ENCODE measurements at regions of chr1 and their contacts with region 1.

Region 1: DNA sequence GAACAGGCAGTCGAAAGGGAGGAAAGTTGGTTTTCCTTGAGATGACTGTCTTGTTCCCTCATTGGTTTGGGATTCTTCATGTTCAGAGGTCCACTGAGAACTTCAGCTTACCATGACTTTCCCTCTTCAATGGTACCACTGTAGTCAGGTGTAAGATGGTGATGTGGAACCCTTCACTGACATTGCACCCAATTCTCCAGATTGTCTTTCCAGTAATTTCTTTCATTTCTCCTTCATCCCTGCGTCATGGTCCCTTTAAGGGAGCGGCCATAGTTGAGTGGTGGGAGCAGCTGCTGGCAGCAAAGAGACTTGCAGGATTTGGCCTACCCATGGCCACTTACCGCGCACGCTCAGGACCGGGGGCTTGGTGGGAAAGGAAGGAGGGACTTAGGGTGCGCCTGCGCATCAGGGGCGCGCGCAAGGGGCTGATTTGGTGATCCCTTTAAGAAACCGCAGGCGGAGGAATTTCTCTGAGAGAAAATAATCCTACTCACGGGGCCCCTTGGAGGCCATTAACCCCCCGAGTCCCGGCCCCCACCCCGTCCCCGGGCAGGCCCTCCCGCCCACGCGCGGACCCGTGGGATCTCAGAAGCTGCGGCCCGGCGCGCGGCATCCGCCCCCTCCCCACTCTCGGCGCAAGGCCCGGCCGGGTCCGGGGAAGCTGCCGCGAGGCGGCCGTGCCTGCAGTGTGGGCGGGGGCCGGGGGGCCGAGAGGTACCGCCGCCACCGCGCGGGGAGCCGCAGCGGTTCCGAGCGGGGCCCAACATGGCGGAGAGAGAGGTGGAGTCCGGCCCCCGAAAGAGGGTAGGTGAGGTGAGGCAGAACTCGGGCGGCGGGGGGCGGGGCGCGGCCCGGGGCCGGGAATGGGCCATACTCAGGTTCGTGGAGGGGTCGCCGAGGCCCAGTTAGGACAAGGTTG is at the start of gene ZMYM4:
- DNase-seq: peak; percentile 60 to 95
- H3K4me3 ChIP-seq: peak within 1 kb of the TSS; percentile 93 to 99
- H3K27ac ChIP-seq: peak within 1 kb of the TSS; percentile 81 to 89
- H3K4me1 ChIP-seq: peaks cover 0 to 10% of the 10 kb centered on the region in 2 donors
- H3K27me3 ChIP-seq: no peaks in the 10 kb centered on the region
- CTCF ChIP-seq: no peak
- total RNA-seq, gene ZMYM4: 9.6 TPM

Region 2: GRCh38 chr1:35192853-35193664 is 75.5 kb before region 1 on chr1 and contains the start of gene SFPQ:
- intact Hi-C with region 1: loop called (anchors 1 kb)
- DNase-seq: peak; percentile 94 to 99
- H3K4me3 ChIP-seq: peak within 1 kb of the TSS; percentile 72 to 100
- H3K27ac ChIP-seq: peak within 1 kb of the TSS; percentile 99
- H3K4me1 ChIP-seq: peaks cover 5 to 22% of the 10 kb centered on the region in 2 donors
- H3K27me3 ChIP-seq: no peaks in the 10 kb centered on the region
- CTCF ChIP-seq: no peak
- total RNA-seq, gene SFPQ: 231 TPM

Region 3: GRCh38 chr1:35298464-35298863 is 29.9 kb after region 1 on chr1:
- intact Hi-C with region 1: loop called (anchors 5 kb)
- DNase-seq: no peak
- H3K4me3 ChIP-seq: no peak overlapping the region
- H3K27ac ChIP-seq: no peak overlapping the region
- H3K4me1 ChIP-seq: peaks cover 0 to 9% of the 10 kb centered on the region in 2 donors
- H3K27me3 ChIP-seq: no peaks in the 10 kb centered on the region
- CTCF ChIP-seq: peak; percentile 14 to 31 (median 30)

Region 4: GRCh38 chr1:35319988-35320713 is 51.6 kb after region 1 on chr1:
- intact Hi-C with region 1: loop called (anchors 5 kb)
- DNase-seq: peak in 1 of 2 donors; percentile 77
- H3K4me3 ChIP-seq: no peak overlapping the region
- H3K27ac ChIP-seq: peak overlapping the region; percentile 42 to 52
- H3K4me1 ChIP-seq: peaks cover 0 to 23% of the 10 kb centered on the region in 2 donors
- H3K27me3 ChIP-seq: no peaks in the 10 kb centered on the region
- CTCF ChIP-seq: no peak

Region 5: DNA sequence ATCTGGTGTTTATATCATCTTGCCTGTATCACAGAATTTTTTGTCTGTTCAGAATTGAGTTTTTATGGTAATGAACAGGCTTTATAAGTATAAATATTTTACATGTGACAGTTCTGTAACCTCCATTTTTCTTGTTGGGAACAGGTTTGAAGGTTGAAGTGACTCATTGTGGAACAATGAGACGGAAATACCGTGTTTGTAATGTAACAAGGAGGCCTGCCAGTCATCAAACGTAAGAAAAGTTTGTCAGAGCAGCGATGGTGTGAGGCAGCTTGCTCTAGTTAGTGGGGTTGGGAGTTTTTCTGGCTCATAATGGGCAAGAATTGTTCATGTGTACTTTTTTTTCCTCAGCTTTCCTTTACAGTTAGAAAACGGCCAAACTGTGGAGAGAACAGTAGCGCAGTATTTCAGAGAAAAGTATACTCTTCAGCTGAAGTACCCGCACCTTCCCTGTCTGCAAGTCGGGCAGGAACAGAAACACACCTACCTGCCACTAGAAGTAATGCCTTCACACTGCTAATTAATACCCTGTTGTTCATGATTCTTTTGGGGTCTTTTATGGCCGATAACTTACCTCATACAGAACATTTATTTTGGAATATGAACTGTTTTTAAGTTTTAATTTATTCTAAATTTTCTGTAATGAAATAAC is 740.1 kb after region 1 on chr1:
- intact Hi-C with region 1: no loop called
- DNase-seq: no peak
- H3K4me3 ChIP-seq: no peak overlapping the region
- H3K27ac ChIP-seq: peak overlapping the region; percentile 32 to 59
- H3K4me1 ChIP-seq: peaks cover 0 to 6% of the 10 kb centered on the region in 2 donors
- H3K27me3 ChIP-seq: no peaks in the 10 kb centered on the region
- CTCF ChIP-seq: no peak

Measured in ascending aorta (tissue), 2 donors.